ENCODE measurements at regions of chr17 and their contacts with region 1.

Region 1: GRCh38 chr17:3859940-3860339 is 13.9 kb upstream of the NCBP3 start:
- DNase-seq: no peak
- H3K4me3 ChIP-seq: no peak overlapping the region
- CTCF ChIP-seq: no peak
- POLR2A ChIP-seq: no peak

Region 2: GRCh38 chr17:3907483-3908216 is 47.7 kb after region 1 on chr17:
- intact Hi-C with region 1: loop called (anchors 5 kb)
- DNase-seq: no peak
- H3K4me3 ChIP-seq: no peak overlapping the region
- CTCF ChIP-seq: no peak
- POLR2A ChIP-seq: no peak

Region 3: DNA sequence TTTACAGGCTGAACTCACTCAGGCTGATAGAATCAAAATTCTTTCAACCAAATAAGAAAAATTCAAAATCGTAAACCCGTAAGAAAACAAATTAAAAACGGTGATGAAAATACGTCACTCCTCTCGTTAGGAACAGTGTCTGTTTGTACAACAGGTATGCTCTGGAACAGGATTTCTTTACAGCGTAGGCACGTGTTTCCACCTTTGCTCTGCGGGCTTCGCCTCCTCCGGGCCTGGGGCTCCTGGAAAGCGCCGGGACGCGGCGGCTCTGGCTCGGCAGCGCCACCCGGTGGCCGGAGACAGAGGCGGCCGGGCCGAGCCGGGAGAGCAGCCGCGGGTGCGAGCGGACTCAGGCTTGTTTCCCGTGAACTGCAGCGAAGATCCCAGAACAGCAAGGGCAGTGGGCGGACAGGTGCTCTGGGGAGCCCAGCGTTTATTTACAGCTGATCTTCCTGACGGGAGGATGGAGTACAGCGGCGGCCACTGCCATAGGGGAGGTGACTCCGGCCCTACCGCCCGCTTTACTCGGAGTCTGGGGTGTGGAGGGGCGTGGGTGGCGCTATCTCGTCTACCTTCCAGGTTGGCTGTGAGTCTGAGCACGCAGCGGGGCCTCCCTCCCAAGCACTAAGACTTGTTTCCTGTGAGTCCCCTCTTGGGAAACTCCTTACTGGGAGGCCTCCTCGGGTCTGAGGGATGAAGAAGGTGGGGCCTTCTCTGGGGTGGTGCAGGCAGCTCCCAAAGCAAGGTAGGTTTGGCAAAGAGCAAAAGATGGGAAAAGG is 144.8 kb after region 1 on chr17:
- intact Hi-C with region 1: loop called (anchors 5 kb)
- DNase-seq: peak in 1 of 2 donors; percentile 88
- H3K4me3 ChIP-seq: no peak overlapping the region
- CTCF ChIP-seq: peak in 2 of 3 donors; percentile 47 to 59
- POLR2A ChIP-seq: no peak